Common myeloid progenitor, CD34-positive (primary cell): ENCODE measurements at regions of chr9 and their contacts with region 1.

Region 1: DNA sequence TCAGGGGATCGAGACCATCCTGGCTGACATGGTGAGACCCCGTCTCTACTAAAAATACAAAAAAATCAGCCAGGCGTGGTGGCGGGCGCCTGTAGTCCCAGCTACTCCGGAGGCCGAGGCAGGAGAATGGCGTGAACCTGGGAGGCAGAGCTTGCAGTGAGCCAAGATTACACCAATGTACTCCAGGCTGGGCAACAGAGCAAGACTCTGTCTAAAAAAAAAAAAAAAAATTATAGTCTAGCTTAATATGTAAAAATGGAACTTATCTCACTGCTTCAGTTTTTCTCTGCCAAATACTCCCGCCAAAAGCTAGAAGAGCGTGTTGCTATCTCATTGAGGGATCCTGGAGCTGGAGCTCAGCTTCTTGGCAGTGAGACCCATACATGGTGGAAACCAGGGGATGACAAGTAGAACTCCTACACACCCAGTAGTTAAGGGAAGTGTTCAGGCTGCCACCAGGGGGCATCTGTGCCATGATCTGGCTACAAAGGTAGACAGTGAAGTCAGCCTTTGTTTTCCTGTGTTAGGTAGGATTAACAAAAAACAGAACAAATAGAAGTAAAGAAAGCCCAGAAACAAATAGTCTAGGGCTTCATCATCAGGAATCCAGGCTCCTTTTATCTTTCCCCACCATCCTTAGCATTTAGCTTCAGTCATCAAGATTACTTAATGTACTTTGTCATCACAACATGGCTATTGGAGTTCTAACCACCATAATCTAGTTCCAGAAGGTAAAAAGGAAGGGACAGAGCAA is 33.6 kb upstream of the GLIPR2 start:
- DNase-seq: peak; percentile 88 to 93 (median 91)
- H3K4me3 ChIP-seq: no peak overlapping the region
- H3K27ac ChIP-seq: no peak overlapping the region
- H3K4me1 ChIP-seq: peaks cover 0 to 3% (median 0%) of the 10 kb centered on the region in 4 experiments
- H3K27me3 ChIP-seq: no peaks in the 10 kb centered on the region

Region 2: GRCh38 chr9:36074870-36075532 is 27.9 kb before region 1 on chr9:
- CTCF ChIA-PET with region 1: interaction called, 17 read pairs
- POLR2A ChIA-PET with region 1: no interaction called
- DNase-seq: peak in 2 of 3 donors; percentile 4 to 16
- H3K4me3 ChIP-seq: no peak overlapping the region
- H3K27ac ChIP-seq: no peak overlapping the region
- H3K4me1 ChIP-seq: peaks cover 0 to 7% (median 3%) of the 10 kb centered on the region in 4 experiments
- H3K27me3 ChIP-seq: no peaks in the 10 kb centered on the region

Region 3: DNA sequence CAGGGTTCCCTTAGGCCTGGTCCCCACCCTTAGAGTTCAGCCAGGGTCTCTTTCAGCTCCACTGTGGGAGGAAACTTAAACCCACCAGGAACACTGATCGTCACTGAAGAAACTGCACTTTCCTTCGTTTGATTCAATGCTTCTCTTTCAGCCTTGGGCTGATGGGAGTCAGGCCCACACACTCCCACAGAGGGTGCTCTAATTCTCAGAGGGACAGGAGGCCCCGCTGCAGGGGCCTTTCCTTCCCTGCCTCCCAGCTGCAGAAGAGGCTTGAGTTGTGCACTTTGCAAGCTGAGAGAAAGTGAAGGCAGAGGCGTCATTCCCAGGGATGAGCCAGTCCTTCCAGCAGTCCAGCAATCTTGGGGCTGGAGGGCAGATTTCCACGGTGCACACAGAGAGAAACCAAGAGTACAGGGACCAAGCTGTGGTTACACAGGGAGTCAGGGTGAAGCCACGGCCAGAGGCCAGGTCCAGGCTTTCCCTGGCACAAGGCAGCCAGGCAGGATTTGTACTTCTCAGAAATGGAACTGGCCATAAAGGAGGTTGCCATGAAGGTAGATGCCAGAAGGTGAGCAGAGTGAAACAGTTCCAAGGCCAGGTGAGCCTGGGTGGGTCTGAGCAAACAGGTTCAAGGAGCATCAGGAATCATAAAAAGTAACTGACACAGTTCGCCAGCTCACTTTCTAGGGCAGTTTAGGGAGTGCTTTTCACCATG is 23.3 kb after region 1 on chr9:
- CTCF ChIA-PET with region 1: interaction called, 34 read pairs
- POLR2A ChIA-PET with region 1: no interaction called
- DNase-seq: no peak
- H3K4me3 ChIP-seq: no peak overlapping the region
- H3K27ac ChIP-seq: no peak overlapping the region
- H3K4me1 ChIP-seq: peaks cover 0 to 20% (median 11%) of the 10 kb centered on the region in 4 experiments
- H3K27me3 ChIP-seq: no peaks in the 10 kb centered on the region

Region 4: DNA sequence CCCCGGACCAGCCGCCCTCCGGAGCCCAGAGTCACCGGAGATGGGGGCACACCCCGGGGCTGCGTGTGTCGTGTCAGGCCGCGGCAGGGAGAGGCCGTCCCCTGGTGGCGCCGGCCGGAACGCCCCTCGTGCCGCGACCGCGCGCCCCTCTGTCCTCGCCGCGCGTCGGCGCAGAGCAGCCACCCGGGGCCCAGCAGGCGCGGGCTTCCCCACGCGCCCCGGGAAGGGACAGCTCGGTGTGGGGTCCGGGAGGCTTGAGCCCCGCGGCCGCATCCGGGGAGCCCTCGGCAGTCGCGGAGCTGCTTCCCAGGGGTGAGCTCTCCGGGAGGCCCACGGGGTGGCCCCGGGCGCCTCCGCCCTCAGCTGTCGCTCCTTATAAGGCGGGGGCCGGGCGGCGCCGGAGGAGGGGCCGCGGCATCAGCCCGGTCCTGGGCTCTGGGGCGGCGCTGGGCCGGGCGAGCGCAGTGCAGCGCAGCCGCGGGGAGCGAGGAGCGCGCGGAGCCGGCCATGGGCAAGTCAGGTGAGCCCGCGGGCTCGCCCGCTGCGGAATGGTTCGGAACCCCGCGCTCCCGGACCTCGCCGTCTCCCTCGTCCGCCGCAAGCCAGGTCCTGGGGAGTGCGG is 33.5 kb after region 1 on chr9 and contains the start of gene GLIPR2:
- CTCF ChIA-PET with region 1: interaction called, 20 read pairs
- POLR2A ChIA-PET with region 1: no interaction called
- DNase-seq: peak in 2 of 3 donors; percentile 64 to 78
- H3K4me3 ChIP-seq: peak within 1 kb of the TSS; percentile 67 to 85 (median 75)
- H3K27ac ChIP-seq: no peak within 1 kb of the TSS
- H3K4me1 ChIP-seq: peaks cover 0 to 51% (median 45%) of the 10 kb centered on the region in 4 experiments
- H3K27me3 ChIP-seq: peaks cover 0 to 17% (median 2%) of the 10 kb centered on the region in 5 experiments

Region 5: DNA sequence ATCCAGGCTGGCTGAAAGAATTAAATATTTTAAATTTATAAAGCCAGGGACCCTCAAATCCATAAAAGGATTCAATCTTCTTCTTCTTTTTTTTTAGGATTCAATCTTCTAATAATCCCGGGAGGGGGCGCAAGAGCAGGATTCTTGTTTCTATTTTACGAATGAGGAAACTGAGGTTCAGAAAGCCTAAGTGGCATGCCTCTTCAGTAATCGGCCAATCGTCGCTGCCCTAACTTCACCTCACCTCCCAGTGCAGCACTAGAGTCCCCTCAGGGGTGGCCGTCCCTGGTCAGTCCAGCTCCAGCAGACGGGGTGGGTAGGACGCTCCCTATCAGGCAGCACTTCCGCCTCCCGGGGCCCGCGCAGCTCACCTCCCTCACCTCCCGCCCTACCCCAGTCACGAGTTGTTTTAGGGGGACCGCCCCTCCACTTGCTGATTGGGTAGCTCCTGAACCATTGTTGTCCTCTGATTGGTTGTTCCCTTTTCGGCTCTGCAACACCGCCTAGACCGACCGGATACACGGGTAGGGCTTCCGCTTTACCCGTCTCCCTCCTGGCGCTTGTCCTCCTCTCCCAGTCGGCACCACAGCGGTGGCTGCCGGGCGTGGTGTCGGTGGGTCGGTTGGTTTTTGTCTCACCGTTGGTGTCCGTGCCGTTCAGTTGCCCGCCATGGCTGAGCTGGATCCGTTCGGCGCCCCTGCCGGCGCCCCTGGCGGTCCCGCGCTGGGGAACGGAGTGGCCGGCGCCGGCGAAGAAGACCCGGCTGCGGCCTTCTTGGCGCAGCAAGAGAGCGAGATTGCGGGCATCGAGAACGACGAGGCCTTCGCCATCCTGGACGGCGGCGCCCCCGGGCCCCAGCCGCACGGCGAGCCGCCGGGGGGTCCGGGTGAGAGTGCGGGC is 87.7 kb after region 1 on chr9 and contains the start of gene CLTA:
- CTCF ChIA-PET with region 1: interaction called, 16 read pairs
- POLR2A ChIA-PET with region 1: interaction called, 3 read pairs
- DNase-seq: peak; percentile 98 to 99 (median 98)
- H3K4me3 ChIP-seq: peak within 1 kb of the TSS; percentile 60 to 99 (median 94)
- H3K27ac ChIP-seq: peak within 1 kb of the TSS; percentile 79 to 94
- H3K4me1 ChIP-seq: peaks cover 24 to 41% (median 30%) of the 10 kb centered on the region in 4 experiments
- H3K27me3 ChIP-seq: no peaks in the 10 kb centered on the region